Dorsolateral prefrontal cortex (tissue), 120 donors: ENCODE measurements at regions of chr11 and their contacts with region 1.

Region 1: DNA sequence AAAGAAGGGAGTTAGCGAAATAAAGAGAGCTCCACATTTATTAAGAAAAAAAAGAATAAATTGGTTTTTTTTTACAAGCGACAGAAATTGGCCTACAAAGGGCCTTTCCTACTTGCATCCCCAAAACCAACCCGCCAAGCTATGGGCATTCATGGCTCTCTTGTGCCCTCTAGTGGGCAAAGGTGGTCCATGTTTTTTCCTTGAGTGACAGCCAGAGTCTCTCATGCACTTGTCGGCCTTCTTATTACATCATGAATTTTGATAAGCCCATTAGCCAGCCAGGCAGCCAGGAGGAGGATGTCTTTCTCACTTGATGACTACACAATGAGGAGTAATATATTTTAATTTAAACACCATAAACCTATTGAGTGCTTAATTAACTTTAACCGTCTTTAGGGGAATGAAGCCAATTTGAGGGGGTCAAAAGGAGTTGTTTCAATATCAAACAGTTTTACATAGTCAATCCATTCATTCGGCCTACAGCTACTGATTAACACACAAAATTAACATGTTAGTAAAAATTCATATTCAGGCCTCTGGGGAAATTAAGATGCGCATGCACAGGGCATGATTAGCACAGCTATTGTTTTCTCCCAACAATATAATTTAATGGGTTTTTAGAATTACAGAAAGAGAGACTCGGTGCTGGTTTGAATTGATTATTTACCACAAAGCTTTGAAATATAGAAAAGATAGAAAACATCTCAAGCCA is 85.5 kb downstream of the RCN1 start:
- DNase-seq: peak; percentile 46 to 90 (median 79)
- H3K4me3 ChIP-seq: peak overlapping the region in 2 of 59 donors; percentile 10 to 20
- H3K27ac ChIP-seq: no peak overlapping the region
- H3K27me3 ChIP-seq: peaks cover 0 to 9% (median 0%) of the 10 kb centered on the region in 45 donors
- CTCF ChIP-seq: peak; percentile 74 to 99 (median 92)

Region 2: DNA sequence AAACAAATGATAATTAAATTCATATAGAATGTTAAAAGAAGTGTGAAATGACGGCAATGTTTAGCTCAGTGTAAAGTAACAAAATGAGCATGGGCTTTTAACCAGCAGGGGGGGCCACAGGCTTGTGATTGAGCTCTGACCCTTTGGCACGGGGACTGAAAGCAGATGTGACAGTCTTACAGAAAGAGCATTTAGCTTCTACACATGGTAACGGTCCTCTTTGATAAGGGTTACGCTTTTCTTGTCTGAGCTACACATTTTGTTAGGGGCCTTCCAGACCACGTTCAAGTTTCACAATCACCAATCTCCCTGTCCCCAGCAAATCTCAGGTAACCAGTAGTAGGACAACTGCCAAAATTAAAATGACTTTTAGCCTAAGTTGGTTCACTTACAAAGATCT is 1069.3 kb before region 1 on chr11:
- intact Hi-C with region 1: loop called in 1 of 2 experiments (anchors 2 kb)
- DNase-seq: peak; percentile 44 to 82 (median 56)
- H3K4me3 ChIP-seq: no peak overlapping the region
- H3K27ac ChIP-seq: no peak overlapping the region
- H3K27me3 ChIP-seq: peaks cover 0 to 5% (median 0%) of the 10 kb centered on the region in 45 donors
- CTCF ChIP-seq: peak; percentile 44 to 89 (median 74)

Region 3: GRCh38 chr11:31240338-31240904 is 936.0 kb before region 1 on chr11:
- intact Hi-C with region 1: loop called (anchors 10 kb)
- DNase-seq: peak in 1 of 10 donors; percentile 28
- H3K4me3 ChIP-seq: no peak overlapping the region
- H3K27ac ChIP-seq: no peak overlapping the region
- H3K27me3 ChIP-seq: no peaks in the 10 kb centered on the region
- CTCF ChIP-seq: peak; percentile 27 to 76 (median 56)

Region 4: GRCh38 chr11:31397239-31397834 is 779.0 kb before region 1 on chr11:
- intact Hi-C with region 1: loop called (anchors 10 kb)
- DNase-seq: no peak
- H3K4me3 ChIP-seq: no peak overlapping the region
- H3K27ac ChIP-seq: no peak overlapping the region
- H3K27me3 ChIP-seq: no peaks in the 10 kb centered on the region
- CTCF ChIP-seq: peak; percentile 37 to 86 (median 66)

Region 5: GRCh38 chr11:32052218-32052617 is 124.2 kb before region 1 on chr11:
- intact Hi-C with region 1: loop called (anchors 1 to 2 kb)
- DNase-seq: peak in 9 of 10 donors; percentile 20 to 76 (median 52)
- H3K4me3 ChIP-seq: no peak overlapping the region
- H3K27ac ChIP-seq: no peak overlapping the region
- H3K27me3 ChIP-seq: peaks cover 0 to 17% (median 0%) of the 10 kb centered on the region in 45 donors
- CTCF ChIP-seq: peak; percentile 79 to 97 (median 86)

Region 6: GRCh38 chr11:32094931-32095330 is 81.4 kb before region 1 on chr11:
- intact Hi-C with region 1: no loop called
- DNase-seq: no peak
- H3K4me3 ChIP-seq: no peak overlapping the region
- H3K27ac ChIP-seq: no peak overlapping the region
- H3K27me3 ChIP-seq: peaks cover 0 to 35% (median 0%) of the 10 kb centered on the region in 45 donors
- CTCF ChIP-seq: no peak

Region 7: DNA sequence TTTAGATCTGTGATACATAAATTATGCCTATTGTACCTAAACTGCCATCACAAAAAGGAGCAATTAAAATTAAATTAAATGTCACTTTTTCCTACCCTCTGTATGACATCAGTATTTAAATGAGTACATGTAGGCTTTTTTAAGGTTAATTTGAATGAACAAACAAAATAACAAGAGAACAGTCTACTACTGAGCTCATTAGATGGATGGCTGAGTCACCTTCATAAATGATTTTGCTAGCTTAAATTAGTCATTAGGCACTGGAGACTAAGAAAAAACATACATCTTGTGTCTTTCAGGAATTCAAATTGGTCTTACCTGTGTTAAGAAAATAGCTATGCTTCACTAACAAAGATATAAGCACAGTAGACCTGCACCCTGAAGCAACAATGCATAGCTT is 68.1 kb after region 1 on chr11:
- intact Hi-C with region 1: no loop called
- DNase-seq: no peak
- H3K4me3 ChIP-seq: no peak overlapping the region
- H3K27ac ChIP-seq: no peak overlapping the region
- H3K27me3 ChIP-seq: peaks cover 0 to 2% (median 0%) of the 10 kb centered on the region in 45 donors
- CTCF ChIP-seq: no peak

Region 8: DNA sequence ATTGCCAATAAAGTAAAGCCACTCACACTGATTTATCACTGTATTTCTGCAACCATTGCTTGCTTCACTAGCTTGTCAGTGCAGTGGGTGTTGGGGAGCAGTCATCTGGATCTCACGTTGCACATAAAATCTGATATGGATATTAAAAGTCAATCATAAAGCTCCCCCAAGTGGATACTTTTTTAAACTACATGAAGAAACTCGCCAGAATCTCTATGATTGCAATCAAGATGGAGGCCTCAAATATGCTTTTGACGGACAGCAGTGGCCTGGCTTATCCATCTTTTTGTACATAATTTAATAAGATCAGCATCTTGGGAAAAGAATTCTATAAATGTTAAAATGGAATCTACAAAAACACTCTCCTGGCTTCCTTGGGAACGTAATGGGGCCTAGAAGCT is 121.2 kb after region 1 on chr11:
- intact Hi-C with region 1: loop called (anchors 1 to 10 kb)
- DNase-seq: peak in 4 of 10 donors; percentile 7 to 49 (median 38)
- H3K4me3 ChIP-seq: no peak overlapping the region
- H3K27ac ChIP-seq: peak overlapping the region in 2 of 59 donors; percentile 1 to 47
- H3K27me3 ChIP-seq: no peaks in the 10 kb centered on the region
- CTCF ChIP-seq: peak; percentile 41 to 83 (median 62)